ENCODE measurements at regions of chr17 and their contacts with region 1.

Region 1: DNA sequence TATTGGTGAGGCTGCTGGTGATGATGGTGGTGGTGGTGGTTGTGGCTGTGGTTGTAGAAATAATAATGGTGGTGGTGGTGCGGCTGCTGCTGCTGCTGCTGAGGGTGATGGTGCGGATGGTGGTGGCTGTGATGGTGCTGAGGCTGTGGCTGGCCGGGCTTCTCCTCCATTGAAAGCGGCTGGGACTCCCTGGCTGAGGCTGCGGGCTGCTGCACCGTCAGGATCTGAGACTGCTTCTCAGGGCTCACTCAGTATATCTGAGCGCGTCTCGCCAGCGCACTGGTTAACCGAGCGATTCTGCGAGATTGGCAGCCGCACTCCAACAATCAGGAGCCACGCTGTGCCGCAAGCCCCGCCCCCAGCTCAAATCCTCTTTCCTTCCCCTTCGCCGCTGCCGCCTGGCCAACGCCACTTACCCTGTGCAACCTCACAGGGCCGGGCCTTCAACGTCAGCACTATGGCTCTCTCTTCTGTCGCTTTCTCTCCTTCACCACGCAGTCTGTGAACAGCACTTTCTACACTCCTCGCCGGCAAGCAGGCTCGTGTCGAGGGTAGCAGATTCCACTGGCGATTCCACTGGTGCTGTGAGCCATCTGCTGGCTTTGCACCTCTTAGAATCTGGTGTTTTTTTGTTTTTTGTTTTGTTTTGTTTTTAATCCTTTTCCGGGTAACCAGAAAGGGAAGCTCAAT is at the start of gene NUFIP2:
- DNase-seq: peak; percentile 96 to 99
- H3K4me3 ChIP-seq: peak within 1 kb of the TSS; percentile 82 to 89
- H3K27ac ChIP-seq: peak within 1 kb of the TSS; percentile 95 to 96
- H3K4me1 ChIP-seq: peaks cover 9 to 15% of the 10 kb centered on the region in 2 donors
- H3K27me3 ChIP-seq: no peaks in the 10 kb centered on the region
- CTCF ChIP-seq: peak in 1 of 3 experiments; percentile 16
- total RNA-seq, gene NUFIP2: 11.0 TPM

Region 2: DNA sequence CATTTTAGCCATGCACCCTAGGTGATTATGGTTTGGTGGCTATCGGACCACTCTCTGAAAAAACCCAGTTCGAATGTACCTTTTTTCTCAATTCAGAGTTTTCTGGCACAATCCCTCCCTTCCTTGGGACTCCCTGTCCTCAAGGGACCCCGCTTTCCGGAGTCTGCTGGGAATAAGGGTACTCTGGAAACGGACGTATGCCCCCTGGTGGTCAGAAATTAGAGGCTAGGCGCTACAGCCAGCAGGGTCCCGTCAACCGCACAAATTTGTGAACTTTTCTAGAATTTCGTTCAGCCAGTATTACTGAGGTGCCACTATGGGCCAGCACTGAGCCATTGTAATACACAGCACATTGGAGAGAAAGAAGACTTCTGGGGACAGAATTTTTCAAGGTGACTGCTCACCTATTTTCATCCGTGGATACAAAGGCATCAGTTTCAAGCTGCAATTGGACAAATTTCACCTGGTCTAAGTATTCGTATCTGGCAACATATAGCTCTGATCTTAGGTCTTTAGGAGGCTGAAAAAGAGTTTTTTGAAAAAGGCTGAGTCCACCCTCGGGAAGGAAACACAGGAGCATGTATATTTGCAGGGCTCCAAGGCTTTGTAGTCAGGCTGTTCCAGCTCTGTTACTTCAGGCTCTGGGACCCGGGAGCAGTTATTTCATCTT is 74.5 kb before region 1 on chr17:
- intact Hi-C with region 1: loop called (anchors 1 kb)
- DNase-seq: peak in 1 of 2 donors; percentile 89
- H3K4me3 ChIP-seq: no peak overlapping the region
- H3K27ac ChIP-seq: no peak overlapping the region
- H3K4me1 ChIP-seq: peaks cover 3 to 10% of the 10 kb centered on the region in 2 donors
- H3K27me3 ChIP-seq: no peaks in the 10 kb centered on the region
- CTCF ChIP-seq: peak; percentile 89 to 98 (median 97)

Region 3: DNA sequence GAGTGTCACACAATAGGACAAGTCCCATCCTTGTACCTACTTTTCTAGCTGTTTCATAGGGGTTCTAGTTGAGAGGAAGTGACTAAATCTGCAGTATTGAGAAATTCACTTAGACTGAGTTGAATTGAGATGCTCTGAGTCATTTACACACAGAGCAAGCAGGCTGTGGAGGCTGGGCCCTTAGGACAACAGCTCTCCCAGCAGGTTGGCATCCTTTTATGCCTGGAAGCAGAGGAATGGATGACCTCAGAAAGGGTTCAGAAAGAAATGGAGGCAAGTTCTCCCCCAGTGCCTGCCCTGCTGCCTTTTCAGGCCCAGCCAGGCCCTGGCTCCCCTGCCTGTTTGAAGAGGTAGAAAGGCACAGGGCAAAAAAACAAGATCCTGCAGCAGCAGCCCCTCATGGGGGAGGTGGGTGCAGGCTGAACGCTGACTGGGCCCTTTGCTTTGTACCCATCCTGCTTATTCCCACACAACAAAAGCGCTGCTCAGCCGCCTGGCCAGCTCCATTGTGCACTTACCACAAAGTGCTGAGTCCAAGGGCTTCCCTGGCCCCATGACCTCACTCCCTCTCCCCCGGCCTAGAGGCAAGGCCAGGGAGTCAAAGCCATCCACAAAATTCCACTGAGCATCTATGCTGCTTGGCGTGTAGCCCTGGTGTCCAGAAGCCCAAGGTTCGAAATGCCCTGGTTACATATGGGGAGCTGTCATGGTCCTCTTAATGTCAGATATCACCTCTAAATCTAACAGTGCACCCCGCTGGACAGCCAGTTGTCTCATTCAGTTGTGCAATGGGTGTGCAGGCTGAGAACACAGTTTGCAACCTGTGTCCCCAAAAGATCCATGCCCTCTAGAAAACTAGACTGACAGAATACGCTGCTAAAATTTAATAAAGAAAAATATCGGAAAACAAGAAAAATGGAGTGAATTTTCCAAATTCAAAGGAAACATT is 52.7 kb before region 1 on chr17:
- intact Hi-C with region 1: loop called (anchors 1 kb)
- DNase-seq: peak; percentile 68 to 92
- H3K4me3 ChIP-seq: no peak overlapping the region
- H3K27ac ChIP-seq: peak overlapping the region; percentile 66 to 86
- H3K4me1 ChIP-seq: peaks cover 9 to 19% of the 10 kb centered on the region in 2 donors
- H3K27me3 ChIP-seq: no peaks in the 10 kb centered on the region
- CTCF ChIP-seq: no peak

Region 4: GRCh38 chr17:29256735-29257466 is 37.1 kb before region 1 on chr17:
- intact Hi-C with region 1: loop called (anchors 2 kb)
- DNase-seq: no peak
- H3K4me3 ChIP-seq: peak overlapping the region; percentile 1 to 11
- H3K27ac ChIP-seq: peak overlapping the region; percentile 48 to 52
- H3K4me1 ChIP-seq: peaks cover 16 to 45% of the 10 kb centered on the region in 2 donors
- H3K27me3 ChIP-seq: no peaks in the 10 kb centered on the region
- CTCF ChIP-seq: no peak

Region 5: DNA sequence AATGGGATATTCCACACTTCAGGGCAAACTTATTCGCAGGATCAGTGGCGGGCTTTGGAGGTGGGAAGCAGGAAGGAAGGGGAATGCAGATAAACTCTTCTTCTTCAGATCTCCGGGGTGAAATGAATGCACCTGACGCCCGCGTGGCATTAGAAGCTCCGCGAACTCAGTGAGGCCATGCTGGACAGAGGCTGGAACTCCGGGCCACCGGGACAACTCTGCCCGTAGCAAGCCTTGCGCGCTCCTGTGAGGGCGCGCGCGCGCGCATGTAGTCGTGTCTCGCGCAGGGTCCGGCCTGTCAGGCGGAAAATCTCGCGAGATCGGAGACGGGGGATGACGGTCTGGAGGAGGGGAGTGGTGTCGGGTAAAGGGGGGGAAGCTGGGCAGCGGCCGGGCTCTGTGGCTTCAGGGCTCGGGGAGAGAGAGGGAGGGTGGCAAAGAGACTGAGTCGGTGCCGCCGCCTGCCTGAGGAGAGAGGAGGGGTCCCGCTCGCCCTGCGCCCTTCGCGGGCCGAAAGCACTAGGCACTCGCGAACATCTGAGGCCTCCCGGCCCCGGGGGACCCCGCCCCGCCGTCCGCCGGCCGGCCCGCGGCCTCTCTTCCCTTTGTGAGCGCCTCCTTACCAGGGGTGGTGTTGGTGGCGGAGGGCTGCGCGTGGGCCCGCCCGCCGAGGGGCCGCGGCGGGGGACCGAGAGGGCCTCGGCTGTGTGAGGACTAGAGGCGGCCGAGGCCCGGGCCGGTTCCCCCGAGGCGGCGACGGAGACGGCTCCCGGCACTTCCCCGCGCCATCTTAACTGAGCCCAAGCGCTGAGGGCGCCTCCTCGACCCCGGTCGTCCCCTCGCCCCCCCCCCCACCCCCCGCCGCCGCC is 96.2 kb after region 1 on chr17 and contains the start of gene TAOK1:
- intact Hi-C with region 1: loop called (anchors 10 kb)
- DNase-seq: peak; percentile 95 to 100
- H3K4me3 ChIP-seq: peak within 1 kb of the TSS; percentile 92 to 98
- H3K27ac ChIP-seq: peak within 1 kb of the TSS; percentile 97 to 98
- H3K4me1 ChIP-seq: peaks cover 5 to 15% of the 10 kb centered on the region in 2 donors
- H3K27me3 ChIP-seq: no peaks in the 10 kb centered on the region
- CTCF ChIP-seq: no peak
- total RNA-seq, gene TAOK1: 20.8 TPM

Measured in ascending aorta (tissue), 2 donors.